Activated CD4-positive, alpha-beta memory T cell treated with anti-CD3 and anti-CD28 coated beads for 36 hours (primary cell): ENCODE measurements at regions of chr1 and their contacts with region 1.

Region 1: GRCh38 chr1:24919791-24920532 is 10.1 kb downstream of the RUNX3 start:
- DNase-seq: peak; percentile 93
- H3K4me3 Mint-ChIP-seq: peak overlapping the region; percentile 50
- H3K27ac Mint-ChIP-seq: peak overlapping the region; percentile 98
- H3K4me1 Mint-ChIP-seq: peaks cover 89% of the 10 kb centered on the region
- H3K27me3 Mint-ChIP-seq: no peaks in the 10 kb centered on the region

Region 2: DNA sequence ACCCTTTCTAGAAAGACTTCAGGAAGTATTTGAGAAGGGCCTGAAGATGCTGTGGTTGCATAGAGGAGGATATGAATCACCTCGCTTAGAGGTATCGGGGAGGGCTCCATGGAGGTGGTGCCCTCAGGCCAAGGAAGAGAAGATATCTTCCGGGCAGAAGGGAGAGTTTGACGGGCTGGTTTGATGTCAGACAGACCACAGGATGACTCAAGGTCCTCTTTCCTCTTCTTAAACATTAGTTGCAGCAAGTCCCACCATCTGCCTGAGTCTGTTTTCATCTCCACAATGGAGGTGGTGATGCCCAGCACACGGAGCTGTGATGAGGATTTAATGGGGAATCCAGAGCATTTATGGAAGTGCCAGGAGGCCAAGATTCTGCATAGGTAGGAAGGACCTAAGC is 35.2 kb after region 1 on chr1:
- CTCF ChIA-PET with region 1: no interaction called
- POLR2A ChIA-PET with region 1: interaction called, 3 read pairs
- intact Hi-C with region 1: loop called (anchors 1 kb)
- DNase-seq: peak; percentile 90
- H3K4me3 Mint-ChIP-seq: peak overlapping the region; percentile 83
- H3K27ac Mint-ChIP-seq: peak overlapping the region; percentile 89
- H3K4me1 Mint-ChIP-seq: peaks cover 90% of the 10 kb centered on the region
- H3K27me3 Mint-ChIP-seq: no peaks in the 10 kb centered on the region

Region 3: DNA sequence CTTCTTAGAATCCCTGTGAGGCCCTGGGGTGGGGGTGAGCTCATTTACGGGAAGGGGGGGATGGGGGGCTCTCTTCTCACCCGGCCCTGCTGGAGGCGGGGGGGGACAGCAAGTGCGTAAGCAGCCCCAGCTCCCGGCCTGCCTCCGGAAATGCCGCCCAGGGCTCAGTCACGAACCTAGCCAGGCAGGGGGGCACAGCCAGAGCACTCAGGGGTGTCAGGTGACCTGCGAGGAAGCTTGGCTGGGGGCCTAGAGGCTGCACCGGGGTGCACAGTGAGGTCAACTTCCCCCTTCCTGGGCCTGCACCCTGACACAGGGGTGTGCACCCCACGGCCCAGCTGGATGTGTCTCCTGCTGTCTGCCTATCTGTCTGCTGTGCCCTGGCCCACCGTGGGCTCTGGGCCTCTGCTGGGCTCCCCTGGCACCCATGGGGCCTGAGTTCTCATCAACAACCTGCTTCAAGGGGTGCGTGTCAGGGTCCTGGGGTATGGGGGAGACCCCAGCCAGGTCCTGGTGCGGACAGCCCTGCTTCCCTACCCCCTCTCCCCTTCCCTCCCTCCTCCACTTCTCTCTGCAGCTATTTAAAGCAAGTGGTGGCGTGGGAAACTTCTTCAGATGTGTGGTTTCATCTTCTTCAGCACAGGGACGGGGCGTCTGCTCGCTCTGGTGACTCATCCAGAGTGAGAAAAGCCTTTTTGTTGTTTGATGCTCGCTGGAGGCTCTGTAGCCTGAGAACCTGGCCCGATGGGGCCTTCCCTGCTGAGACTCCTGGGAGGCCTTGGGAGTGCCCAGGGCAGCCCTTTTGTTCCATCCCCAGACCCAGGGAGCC is 102.6 kb after region 1 on chr1:
- CTCF ChIA-PET with region 1: no interaction called
- POLR2A ChIA-PET with region 1: interaction called, 13 read pairs
- intact Hi-C with region 1: loop called (anchors 2 kb)
- DNase-seq: peak; percentile 97
- H3K4me3 Mint-ChIP-seq: peak overlapping the region; percentile 77
- H3K27ac Mint-ChIP-seq: peak overlapping the region; percentile 97
- H3K4me1 Mint-ChIP-seq: peaks cover 84% of the 10 kb centered on the region
- H3K27me3 Mint-ChIP-seq: no peaks in the 10 kb centered on the region

Region 4: GRCh38 chr1:25117233-25117823 is 197.4 kb after region 1 on chr1:
- CTCF ChIA-PET with region 1: no interaction called
- POLR2A ChIA-PET with region 1: no interaction called
- intact Hi-C with region 1: loop called (anchors 1 kb)
- DNase-seq: peak; percentile 58
- H3K4me3 Mint-ChIP-seq: no peak overlapping the region
- H3K27ac Mint-ChIP-seq: no peak overlapping the region
- H3K4me1 Mint-ChIP-seq: peaks cover 28% of the 10 kb centered on the region
- H3K27me3 Mint-ChIP-seq: no peaks in the 10 kb centered on the region